ENCODE measurements at regions of chr21 and their contacts with region 1.

Region 1: GRCh38 chr21:45363921-45364467 is 41.0 kb upstream of the COL18A1 start:
- DNase-seq: peak; percentile 93 to 97
- H3K4me3 ChIP-seq: peak overlapping the region; percentile 8 to 42
- H3K27ac ChIP-seq: peak overlapping the region; percentile 93 to 98
- H3K4me1 ChIP-seq: peaks cover 0 to 53% (median 44%) of the 10 kb centered on the region in 4 donors
- H3K27me3 ChIP-seq: no peaks in the 10 kb centered on the region
- CTCF ChIP-seq: no peak

Region 2: GRCh38 chr21:45109831-45110492 is 254.0 kb before region 1 on chr21:
- intact Hi-C with region 1: no loop called
- DNase-seq: peak in 1 of 2 donors; percentile 70
- H3K4me3 ChIP-seq: peak overlapping the region; percentile 4 to 13
- H3K27ac ChIP-seq: peak overlapping the region; percentile 75 to 76
- H3K4me1 ChIP-seq: peaks cover 0 to 98% (median 68%) of the 10 kb centered on the region in 4 donors
- H3K27me3 ChIP-seq: no peaks in the 10 kb centered on the region
- CTCF ChIP-seq: no peak

Region 3: GRCh38 chr21:45294509-45295291 is 69.3 kb before region 1 on chr21:
- intact Hi-C with region 1: loop called (anchors 2 kb)
- DNase-seq: peak; percentile 88 to 98
- H3K4me3 ChIP-seq: peak overlapping the region in 1 of 2 donors; percentile 17
- H3K27ac ChIP-seq: peak overlapping the region; percentile 94 to 98
- H3K4me1 ChIP-seq: peaks cover 10 to 70% (median 52%) of the 10 kb centered on the region in 4 donors
- H3K27me3 ChIP-seq: no peaks in the 10 kb centered on the region
- CTCF ChIP-seq: peak in 1 of 2 experiments; percentile 5

Region 4: DNA sequence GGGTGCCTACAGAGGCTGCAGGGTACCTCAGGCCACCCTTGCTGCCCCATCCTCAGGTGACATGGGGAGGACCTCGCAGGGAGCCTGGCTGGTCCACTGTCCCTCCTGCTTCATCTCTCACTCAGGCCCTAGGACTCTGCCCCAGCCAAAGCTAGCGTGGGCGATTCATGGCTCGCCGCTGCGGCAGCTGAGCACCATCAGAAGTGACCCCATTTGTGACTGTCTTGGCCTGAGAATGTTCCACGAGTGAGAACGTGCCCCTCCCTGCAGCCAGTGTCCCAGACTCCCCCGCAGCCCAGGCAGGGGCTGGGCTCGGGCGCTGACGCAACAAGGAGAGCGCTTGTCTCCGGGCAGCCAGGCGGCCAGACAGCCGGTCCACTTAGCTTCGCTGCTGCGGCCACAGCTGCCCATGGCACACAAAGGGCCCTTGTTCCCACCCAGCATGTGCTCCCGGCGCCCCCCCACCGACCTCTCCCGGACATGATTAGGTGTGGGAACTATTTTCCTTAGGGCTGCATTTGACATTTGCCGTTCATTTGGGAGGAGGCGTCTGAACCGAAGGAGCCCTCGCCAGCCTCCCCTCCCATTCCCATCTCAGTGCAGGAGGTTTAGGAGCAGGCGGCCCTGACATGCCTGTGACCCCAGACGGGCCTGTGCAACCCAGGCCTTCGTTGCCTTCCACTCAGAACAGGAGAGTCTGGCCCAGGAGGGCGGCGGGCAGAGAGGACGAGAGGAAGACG is 57.0 kb before region 1 on chr21:
- intact Hi-C with region 1: no loop called
- DNase-seq: peak; percentile 72 to 96
- H3K4me3 ChIP-seq: peak overlapping the region in 1 of 2 donors; percentile 9
- H3K27ac ChIP-seq: peak overlapping the region; percentile 84 to 98
- H3K4me1 ChIP-seq: peaks cover 0 to 46% (median 33%) of the 10 kb centered on the region in 4 donors
- H3K27me3 ChIP-seq: no peaks in the 10 kb centered on the region
- CTCF ChIP-seq: no peak

Region 5: DNA sequence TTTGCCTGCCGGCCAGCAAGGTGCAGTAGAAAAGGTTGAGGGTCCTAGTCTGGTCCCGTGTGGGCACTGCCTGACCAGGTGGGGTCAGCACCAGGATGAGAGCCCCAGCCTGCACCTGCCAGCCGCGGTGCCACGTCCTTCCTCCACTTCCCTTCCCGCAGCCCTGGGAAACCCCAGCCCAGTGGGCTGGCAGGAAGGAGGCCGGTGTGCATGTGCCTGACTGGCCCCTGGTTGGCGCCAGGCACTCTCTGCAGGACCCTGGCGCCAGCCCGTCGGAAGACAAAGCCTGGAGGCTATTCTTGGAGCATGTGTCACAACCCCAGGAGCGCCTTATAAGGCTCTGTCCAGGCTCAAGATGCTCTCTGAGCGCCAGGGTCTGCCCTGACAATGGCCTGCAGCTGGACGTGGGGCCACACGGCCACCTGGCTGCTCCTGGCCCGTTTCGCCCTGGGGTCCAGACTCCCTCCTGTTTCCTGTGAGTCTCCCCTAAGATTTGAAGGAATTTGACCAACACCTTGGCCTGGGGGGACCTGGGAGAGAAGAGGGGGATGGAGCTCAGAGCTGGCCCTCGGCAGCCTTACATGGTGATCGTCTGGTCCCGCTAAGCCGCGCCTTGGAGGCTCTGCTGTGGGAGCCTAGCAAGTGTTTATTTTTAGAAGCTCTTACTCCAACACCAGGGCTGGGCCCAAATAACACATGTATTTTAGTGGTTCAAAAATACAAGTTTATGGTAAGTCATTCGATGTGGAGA is 44.4 kb before region 1 on chr21:
- intact Hi-C with region 1: loop called (anchors 2 kb)
- DNase-seq: peak; percentile 73 to 95
- H3K4me3 ChIP-seq: no peak overlapping the region
- H3K27ac ChIP-seq: peak overlapping the region; percentile 96 to 99
- H3K4me1 ChIP-seq: peaks cover 5 to 81% (median 73%) of the 10 kb centered on the region in 4 donors
- H3K27me3 ChIP-seq: no peaks in the 10 kb centered on the region
- CTCF ChIP-seq: peak in 1 of 2 experiments; percentile 16

Measured in tibial artery (tissue), 4 donors.